ENCODE measurements at regions of chr9 and their contacts with region 1.

Region 1: DNA sequence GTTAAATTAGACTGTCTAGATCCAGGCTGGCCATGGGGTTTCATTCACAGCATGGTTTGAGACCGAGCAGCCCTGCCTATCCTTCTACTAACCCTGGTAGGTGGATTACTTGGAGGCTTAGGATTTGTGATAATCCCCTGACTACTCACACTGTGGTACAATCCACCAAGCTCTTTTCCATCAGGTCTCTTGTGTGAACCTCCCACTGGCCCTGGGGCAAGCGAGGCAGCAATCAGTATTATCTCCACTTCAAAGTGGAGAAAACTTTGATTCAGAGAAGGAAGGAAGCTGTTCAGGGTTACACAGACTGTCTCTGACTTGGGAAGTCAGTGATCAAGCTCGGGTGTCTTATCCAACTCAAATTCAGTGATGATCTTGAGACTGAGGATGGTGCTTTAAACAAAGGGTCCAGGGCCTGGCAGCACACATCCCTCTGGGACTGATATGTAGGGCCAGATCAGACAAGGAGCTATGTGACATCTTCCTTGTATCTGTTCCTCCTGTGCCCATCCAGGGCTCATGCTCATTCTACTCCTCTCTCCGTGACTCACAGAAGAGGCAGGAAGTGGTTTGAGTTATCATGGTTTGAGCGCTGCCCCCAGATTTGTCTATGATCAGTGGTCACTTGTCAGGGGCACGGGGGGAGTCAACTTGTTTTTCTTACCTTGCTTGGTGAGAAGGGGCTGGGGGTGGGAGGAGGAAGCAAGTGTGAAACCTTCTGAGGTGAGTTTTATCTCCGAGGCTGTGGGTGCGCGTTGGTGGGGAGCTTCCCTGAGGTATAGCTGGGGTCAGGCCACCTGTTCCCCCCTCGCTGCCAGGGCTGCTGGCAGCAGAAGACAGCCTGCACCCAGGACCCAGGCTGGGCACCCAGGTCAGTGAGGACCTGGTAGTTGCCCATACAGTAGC is 48.6 kb downstream of the RGS3 start:
- DNase-seq: peak; percentile 79
- H3K4me3 Mint-ChIP-seq: peak overlapping the region; percentile 23
- H3K27ac Mint-ChIP-seq: peak overlapping the region; percentile 86
- H3K4me1 Mint-ChIP-seq: peaks cover 46% of the 10 kb centered on the region
- H3K27me3 Mint-ChIP-seq: peaks cover 3% of the 10 kb centered on the region

Region 2: DNA sequence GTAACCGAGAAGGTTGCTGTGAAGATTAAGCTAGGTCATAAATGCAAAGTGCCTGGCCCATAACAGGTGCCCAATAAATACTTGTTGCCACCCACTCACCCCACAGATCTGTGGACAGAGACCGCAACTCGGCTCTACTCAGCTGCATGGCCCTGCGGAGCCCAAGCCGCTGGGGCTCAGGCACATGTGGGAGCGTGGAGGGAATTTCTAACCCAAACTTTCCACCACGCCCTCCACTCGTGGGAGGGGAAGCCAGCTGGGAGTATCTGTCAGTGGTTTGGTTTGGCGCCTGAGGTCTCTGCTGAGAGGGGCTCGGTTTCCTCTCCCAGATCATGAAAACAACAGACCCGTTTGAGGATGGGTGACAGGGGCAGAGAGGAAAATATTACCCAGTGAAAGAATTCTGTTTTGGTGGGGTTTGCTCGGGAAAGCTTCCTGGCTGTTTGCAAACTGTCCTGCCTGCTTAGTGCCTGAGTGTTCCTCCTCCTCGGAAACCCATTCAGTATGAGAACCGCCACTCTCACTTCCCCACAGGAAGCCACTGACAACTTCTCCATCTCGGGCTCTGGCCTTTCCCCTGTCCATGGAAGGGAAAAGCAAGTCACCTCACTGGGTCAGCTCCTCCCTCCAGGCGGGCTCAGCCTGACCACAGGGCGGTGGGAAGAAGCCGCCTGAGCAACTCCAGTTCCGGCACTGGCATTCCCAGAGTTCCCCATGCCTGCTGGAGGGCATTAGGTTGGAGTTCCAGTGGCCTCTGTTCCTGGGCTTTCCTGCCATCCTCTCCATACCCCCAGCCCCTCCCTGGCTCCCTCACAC is 11.5 kb after region 1 on chr9:
- CTCF ChIA-PET with region 1: interaction called, 7 read pairs
- POLR2A ChIA-PET with region 1: interaction called, 16 read pairs
- DNase-seq: peak; percentile 52
- H3K4me3 Mint-ChIP-seq: peak overlapping the region; percentile 5
- H3K27ac Mint-ChIP-seq: peak overlapping the region; percentile 45
- H3K4me1 Mint-ChIP-seq: peaks cover 62% of the 10 kb centered on the region
- H3K27me3 Mint-ChIP-seq: no peaks in the 10 kb centered on the region